ENCODE measurements at regions of chr19 and their contacts with region 1.

Region 1: DNA sequence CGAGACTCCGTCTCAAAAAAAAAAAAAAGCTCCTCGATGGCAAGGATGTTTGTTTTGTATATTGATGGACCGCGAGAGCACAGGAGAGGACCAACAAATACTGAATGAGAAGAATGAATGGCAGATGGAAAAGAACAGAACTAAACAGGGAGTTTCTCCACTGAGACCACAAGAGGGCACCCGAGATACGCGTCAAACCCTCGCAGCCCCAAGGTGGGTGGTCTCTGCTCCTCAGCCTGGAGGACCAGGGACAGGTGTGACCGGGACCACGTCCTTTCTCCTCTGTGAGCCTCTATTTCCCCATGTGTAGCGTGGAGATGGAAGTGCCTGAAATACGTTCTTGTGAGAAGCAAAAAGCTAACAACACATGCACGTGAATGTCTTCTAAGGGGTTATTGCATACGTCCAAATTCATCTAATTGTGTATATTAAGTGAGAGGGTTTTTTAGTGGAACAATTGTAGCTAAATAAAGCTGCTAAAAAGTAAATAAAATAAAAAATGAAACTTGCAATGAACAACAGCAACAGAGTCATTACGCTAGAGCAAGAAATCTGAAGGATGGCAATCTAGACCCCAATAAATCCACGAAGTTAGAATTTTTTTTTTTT is 8.3 kb upstream of the CDC42EP5 start:
- DNase-seq: peak; percentile 78
- H3K4me3 ChIP-seq: no peak overlapping the region
- H3K27ac ChIP-seq: no peak overlapping the region
- H3K4me1 ChIP-seq: no peaks in the 10 kb centered on the region
- H3K27me3 ChIP-seq: peaks cover 4% of the 10 kb centered on the region
- CTCF ChIP-seq: peak; percentile 82

Region 2: DNA sequence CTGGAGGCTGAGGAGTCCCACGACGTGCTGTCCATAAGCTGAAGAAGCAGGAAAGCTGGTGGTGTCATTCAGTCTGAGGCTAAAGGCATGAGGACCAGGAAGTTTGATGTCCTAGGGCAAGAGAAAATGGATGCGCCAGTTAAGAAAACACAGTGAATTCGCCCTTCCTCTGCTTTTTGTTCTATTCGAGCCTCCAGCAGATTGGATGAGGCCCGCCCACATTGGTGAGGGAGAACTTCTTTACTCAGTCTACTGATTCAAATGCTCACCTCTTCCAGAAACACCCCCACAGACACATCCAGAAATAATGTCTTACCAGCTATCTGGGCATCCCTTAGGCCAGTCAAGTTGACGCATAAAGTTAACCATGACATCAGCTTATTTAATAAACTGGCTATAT is 73.6 kb before region 1 on chr19:
- CTCF ChIA-PET with region 1: interaction called, 11 read pairs
- POLR2A ChIA-PET with region 1: no interaction called
- intact Hi-C with region 1: no loop called
- DNase-seq: no peak
- H3K4me3 ChIP-seq: no peak overlapping the region
- H3K27ac ChIP-seq: no peak overlapping the region
- H3K4me1 ChIP-seq: no peaks in the 10 kb centered on the region
- H3K27me3 ChIP-seq: peaks cover 5% of the 10 kb centered on the region
- CTCF ChIP-seq: no peak

Region 3: DNA sequence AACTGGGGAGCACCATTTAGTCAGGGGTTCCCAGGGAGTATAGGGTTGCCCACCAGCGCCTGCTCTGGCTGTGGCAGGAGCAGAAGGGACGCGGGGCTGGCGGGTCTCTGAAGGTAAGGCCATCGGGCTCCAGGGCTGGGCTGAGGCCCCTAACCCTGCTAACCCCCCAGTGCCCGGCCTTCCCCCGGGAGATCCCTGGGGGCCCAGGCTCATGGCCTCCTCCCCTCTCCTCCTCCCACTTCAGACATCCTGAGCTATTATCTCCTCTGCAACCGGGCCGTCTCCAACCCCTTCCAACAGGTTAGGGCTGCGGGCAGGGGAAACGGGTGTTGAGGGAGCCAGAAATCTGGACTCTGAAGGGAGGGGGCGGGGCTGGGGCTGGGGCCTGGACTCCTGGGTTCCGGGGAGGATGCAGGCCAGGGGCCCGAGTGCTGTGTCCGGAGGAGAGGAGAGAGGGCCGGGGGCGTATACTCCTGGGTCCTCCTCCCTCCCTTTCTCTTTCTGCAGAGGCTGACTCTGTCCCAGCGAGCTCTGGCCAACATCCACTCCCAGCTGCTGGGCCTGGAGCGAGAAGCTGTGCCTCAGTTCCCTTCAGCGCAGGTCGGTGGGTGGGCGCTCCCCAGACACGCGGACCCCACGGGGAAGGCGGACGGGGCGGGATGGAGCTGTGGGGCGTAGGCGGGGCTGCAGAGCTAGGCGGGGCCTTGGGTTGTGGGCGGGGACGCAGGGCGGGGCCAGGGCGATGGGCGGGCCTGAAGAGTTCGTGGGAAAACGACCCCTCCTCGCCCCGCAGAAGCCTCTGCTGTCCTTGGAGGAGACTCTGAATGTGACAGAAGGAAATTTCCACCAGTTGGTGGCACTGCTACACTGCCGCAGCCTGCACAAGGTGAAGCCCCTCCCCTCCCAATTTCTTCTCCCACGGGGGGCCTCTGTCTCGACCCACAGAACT is 50.8 kb before region 1 on chr19:
- CTCF ChIA-PET with region 1: interaction called, 4 read pairs
- POLR2A ChIA-PET with region 1: interaction called, 20 read pairs
- intact Hi-C with region 1: no loop called
- DNase-seq: peak; percentile 81
- H3K4me3 ChIP-seq: peak overlapping the region; percentile 47
- H3K27ac ChIP-seq: no peak overlapping the region
- H3K4me1 ChIP-seq: peaks cover 16% of the 10 kb centered on the region
- H3K27me3 ChIP-seq: peaks cover 4% of the 10 kb centered on the region
- CTCF ChIP-seq: peak; percentile 54

Region 4: DNA sequence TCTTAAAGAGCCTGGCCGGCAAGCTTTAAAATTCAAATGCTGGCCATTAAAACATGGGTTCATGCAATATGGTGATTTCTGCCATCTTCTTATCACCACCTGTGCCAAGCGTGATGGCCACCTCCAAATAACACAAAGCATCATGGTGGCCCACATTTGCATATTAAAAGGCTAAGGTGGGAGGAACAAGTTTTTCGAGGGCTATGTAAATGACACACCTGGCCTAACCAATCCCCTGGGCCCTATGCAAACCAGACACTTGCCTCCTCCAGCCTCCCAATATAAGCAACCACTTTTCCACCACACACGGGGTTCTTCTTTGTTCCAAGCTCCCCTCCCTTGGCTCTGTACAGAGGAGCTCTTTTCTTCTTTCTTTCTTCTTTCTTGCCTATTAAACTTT is 195.8 kb after region 1 on chr19:
- CTCF ChIA-PET with region 1: no interaction called
- POLR2A ChIA-PET with region 1: interaction called, 4 read pairs
- intact Hi-C with region 1: loop called (anchors 5 kb)
- DNase-seq: no peak
- H3K4me3 ChIP-seq: no peak overlapping the region
- H3K27ac ChIP-seq: no peak overlapping the region
- H3K4me1 ChIP-seq: no peaks in the 10 kb centered on the region
- H3K27me3 ChIP-seq: peaks cover 28% of the 10 kb centered on the region
- CTCF ChIP-seq: no peak